ENCODE measurements at regions of chr2 and their contacts with region 1.

Region 1: DNA sequence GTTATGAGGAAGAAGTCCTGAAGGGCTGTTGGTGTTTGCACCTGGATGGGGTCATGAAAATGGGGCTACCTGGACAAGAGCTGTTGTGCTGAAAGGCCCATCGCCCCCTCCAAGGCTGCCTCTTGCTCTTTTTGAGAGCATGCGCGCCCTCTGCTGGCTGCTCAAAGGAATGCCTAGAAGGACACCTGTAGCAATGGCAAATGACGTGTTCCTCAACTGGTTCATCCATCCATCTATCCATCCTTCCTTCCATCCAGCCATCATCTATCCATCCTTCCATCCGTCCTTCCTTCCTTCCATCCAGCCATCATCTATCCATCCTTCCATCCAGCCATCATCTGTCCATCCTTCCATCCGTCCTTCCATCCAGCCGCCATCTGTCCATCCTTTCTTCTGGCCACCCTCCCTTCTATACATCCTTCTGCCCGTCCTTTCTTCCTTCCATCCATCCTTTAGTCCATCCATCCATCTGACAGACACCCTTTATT is 17.2 kb upstream of the RPL31 start:
- DNase-seq: peak; percentile 76 to 83
- H3K4me3 ChIP-seq: no peak overlapping the region
- H3K27ac ChIP-seq: peak overlapping the region in 1 of 2 donors; percentile 64
- H3K4me1 ChIP-seq: no peaks in the 10 kb centered on the region
- H3K27me3 ChIP-seq: no peaks in the 10 kb centered on the region
- CTCF ChIP-seq: peak; percentile 90 to 95 (median 92)
- POLR2A ChIP-seq: no peak

Region 2: DNA sequence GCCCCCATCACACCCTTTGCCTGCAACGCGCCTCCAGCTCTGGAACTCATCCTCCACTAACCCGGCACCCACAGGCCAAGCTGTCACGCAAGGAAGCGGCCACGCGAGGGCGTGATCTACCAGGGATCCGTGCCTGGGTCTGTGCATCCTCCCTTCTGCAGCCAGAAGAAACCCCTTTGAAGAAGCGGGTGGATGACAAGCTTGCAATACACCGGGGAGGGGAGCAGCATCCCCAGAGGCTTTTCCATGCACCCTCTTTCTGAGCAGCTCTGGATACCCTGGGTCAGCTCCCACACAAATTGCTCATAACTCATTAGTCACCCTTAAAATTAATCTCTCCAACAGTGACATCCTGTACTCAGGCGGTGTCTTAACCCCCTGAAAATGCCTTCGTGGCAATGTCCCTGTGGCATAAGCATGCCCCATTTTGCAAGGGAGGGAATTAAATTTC is 374.5 kb before region 1 on chr2:
- intact Hi-C with region 1: loop called (anchors 2 kb)
- DNase-seq: peak; percentile 56 to 77
- H3K4me3 ChIP-seq: no peak overlapping the region
- H3K27ac ChIP-seq: no peak overlapping the region
- H3K4me1 ChIP-seq: no peaks in the 10 kb centered on the region
- H3K27me3 ChIP-seq: no peaks in the 10 kb centered on the region
- CTCF ChIP-seq: peak; percentile 53 to 70 (median 64)
- POLR2A ChIP-seq: no peak

Region 3: GRCh38 chr2:100703213-100703612 is 281.7 kb before region 1 on chr2:
- intact Hi-C with region 1: loop called (anchors 10 kb)
- DNase-seq: peak; percentile 61 to 77
- H3K4me3 ChIP-seq: no peak overlapping the region
- H3K27ac ChIP-seq: peak overlapping the region in 1 of 2 donors; percentile 80
- H3K4me1 ChIP-seq: no peaks in the 10 kb centered on the region
- H3K27me3 ChIP-seq: no peaks in the 10 kb centered on the region
- CTCF ChIP-seq: no peak
- POLR2A ChIP-seq: no peak